MCF 10A (cell line): ENCODE measurements at regions of chr2 and their contacts with region 1.

Region 1: DNA sequence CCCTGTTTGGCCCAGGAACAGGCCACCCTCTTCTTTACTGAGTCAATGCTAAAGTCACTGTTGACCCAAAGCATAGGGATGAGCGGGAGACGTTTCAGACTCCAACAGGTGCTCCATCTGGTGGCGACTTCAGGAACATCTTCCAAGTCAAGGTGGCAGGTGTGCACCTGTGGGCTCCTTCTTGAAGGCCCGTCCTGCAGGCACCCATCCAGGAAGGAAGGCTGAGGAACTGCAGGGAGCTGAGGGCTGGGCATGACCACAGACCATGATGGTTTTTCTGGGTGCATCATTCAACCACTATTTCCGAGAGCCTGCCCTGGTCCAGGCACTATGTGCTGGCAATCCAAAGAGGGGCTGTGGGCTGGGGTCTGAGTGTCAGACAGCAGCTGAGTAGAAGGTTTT is 142.8 kb downstream of the NDUFA10 start:
- DNase-seq: peak; percentile 67
- H3K4me3 Mint-ChIP-seq: no peak overlapping the region
- H3K27ac Mint-ChIP-seq: no peak overlapping the region
- H3K4me1 Mint-ChIP-seq: peaks cover 7% of the 10 kb centered on the region
- H3K27me3 Mint-ChIP-seq: peaks cover 20% of the 10 kb centered on the region
- CTCF ChIP-seq: peak; percentile 60

Region 2: DNA sequence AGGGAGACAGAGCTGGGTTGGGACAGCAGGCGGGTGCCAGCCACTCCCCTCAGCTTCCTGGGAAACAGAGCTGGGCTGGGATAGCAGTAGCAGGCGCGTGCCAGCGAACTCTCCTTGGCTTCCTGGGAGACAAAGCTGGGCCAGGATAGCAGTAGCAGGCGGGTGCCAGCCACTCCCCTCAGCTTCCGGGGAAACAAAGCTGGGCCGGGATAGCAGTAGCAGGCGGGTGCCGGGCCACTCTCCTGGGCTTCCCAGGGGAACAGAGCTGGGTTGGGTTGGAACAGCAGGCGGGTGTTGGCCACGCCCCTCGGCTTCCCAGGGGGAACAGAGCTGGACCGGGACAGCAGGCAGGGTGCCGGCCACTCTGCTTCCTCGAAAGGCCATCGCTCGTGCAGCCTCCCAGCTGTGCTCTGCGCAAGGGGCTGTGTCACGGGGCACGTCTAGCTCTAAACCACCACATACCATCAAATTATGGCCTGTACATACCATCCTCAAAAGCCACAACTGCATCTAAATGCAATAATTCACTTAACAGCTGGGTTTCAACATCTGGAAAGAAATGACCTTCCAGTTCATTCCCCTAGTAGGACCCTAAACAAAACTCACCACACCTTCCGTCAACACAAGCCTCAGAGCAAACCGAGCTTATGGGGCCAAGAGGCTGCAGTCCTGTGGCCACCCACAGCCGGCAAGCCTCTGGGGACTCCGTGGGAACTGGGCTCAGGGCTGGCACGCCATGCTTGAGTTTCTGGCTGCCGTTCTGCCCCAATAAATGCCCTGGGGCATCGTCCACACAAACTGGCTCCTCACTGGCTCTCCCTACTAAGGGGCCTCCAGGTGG is 806.2 kb before region 1 on chr2:
- CTCF ChIA-PET with region 1: no interaction called
- POLR2A ChIA-PET with region 1: no interaction called
- intact Hi-C with region 1: no loop called
- DNase-seq: no peak
- H3K4me3 Mint-ChIP-seq: no peak overlapping the region
- H3K27ac Mint-ChIP-seq: no peak overlapping the region
- H3K4me1 Mint-ChIP-seq: no peaks in the 10 kb centered on the region
- H3K27me3 Mint-ChIP-seq: no peaks in the 10 kb centered on the region
- CTCF ChIP-seq: no peak

Region 3: DNA sequence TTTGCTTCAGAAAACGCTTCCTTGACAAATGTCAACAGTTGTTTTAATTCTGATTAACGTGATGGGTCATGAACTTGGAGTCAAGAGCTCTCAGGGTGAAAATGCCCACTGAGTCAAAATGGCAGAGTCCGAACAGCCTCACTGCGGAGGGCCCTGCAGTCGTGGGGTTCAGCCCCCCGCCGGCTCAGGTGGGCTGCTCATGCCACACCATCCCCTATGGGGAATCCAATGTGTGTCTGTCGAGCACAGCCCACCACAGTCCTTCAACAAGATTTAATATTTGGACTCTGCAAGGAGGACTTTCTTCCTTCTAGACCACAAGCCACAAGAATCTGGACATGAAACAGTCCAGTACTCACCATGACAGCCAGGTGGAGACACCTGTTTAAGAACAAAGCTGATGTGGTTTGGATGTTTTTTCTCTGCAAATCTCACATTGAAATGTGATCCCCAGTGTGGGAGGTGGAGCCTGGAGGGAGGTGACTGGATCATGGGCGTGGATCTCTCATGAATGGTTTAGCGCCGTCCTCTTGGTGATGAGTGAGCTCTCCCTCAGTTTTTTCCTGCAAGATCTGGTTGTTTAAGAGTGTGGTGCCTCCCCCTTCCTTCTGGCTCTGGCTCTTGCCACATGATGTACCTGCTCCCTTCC is 58.2 kb before region 1 on chr2:
- CTCF ChIA-PET with region 1: interaction called, 4 read pairs
- POLR2A ChIA-PET with region 1: no interaction called
- intact Hi-C with region 1: loop called (anchors 1 kb)
- DNase-seq: peak; percentile 89
- H3K4me3 Mint-ChIP-seq: no peak overlapping the region
- H3K27ac Mint-ChIP-seq: no peak overlapping the region
- H3K4me1 Mint-ChIP-seq: peaks cover 6% of the 10 kb centered on the region
- H3K27me3 Mint-ChIP-seq: peaks cover 44% of the 10 kb centered on the region
- CTCF ChIP-seq: peak; percentile 54